Endothelial cell of umbilical vein (primary cell): ENCODE measurements at regions of chr1 and their contacts with region 1.

Region 1: DNA sequence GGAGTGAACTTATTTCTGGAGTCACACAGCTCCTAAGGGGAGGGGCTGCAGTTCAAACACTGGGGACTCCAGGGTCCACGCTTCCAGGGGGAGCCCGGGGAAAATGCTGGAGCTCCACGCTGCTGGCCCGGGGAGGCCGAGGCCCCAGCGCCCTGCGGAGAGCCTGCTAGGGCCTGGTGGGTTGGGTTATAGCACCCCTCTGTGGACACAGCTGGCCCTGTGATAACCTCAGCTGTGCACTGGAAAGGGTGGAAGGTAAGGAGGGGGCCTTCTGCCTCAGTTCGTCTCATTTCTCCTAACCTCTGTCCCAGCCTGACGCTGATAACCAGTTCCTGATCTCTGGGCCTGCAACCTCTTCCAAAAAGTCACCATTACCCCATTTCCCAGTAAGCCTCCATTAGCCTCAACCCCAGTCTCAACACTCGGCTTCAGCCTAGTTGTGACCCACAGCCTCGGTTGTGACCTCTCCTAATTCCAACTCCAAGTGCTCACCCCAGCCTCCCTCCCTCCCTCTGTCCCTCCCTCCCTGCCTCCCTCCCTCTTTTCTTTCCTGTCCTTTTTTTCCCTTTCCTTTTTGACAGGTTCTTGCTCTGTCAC is 7.1 kb downstream of the NBL1 start:
- DNase-seq: peak; percentile 49
- H3K4me3 ChIP-seq: no peak overlapping the region
- H3K27ac ChIP-seq: peak overlapping the region; percentile 65
- H3K4me1 ChIP-seq: peaks cover 14% of the 10 kb centered on the region
- H3K27me3 ChIP-seq: no peaks in the 10 kb centered on the region
- CTCF ChIP-seq: peak; percentile 78 to 85
- POLR2A ChIP-seq: no peak

Region 2: GRCh38 chr1:19251305-19252196 is 399.7 kb before region 1 on chr1 and contains the starts of genes EMC1 and MRTO4:
- CTCF ChIA-PET with region 1: interaction called, 8 read pairs
- POLR2A ChIA-PET with region 1: no interaction called
- dilution Hi-C with region 1: no loop called
- intact Hi-C with region 1: loop called (anchors 1 kb)
- DNase-seq: peak; percentile 89
- H3K4me3 ChIP-seq: peak within 1 kb of the TSS; percentile 59 to 81 (median 78)
- H3K27ac ChIP-seq: peak within 1 kb of the TSS; percentile 54
- H3K4me1 ChIP-seq: peaks cover 18% of the 10 kb centered on the region
- H3K27me3 ChIP-seq: no peaks in the 10 kb centered on the region
- CTCF ChIP-seq: no peak
- POLR2A ChIP-seq: peak; percentile 91
- total RNA-seq, gene EMC1: 77.5 and 84.8 TPM in 2 replicates
- total RNA-seq, gene MRTO4: 47.7 and 49.4 TPM in 2 replicates

Region 3: DNA sequence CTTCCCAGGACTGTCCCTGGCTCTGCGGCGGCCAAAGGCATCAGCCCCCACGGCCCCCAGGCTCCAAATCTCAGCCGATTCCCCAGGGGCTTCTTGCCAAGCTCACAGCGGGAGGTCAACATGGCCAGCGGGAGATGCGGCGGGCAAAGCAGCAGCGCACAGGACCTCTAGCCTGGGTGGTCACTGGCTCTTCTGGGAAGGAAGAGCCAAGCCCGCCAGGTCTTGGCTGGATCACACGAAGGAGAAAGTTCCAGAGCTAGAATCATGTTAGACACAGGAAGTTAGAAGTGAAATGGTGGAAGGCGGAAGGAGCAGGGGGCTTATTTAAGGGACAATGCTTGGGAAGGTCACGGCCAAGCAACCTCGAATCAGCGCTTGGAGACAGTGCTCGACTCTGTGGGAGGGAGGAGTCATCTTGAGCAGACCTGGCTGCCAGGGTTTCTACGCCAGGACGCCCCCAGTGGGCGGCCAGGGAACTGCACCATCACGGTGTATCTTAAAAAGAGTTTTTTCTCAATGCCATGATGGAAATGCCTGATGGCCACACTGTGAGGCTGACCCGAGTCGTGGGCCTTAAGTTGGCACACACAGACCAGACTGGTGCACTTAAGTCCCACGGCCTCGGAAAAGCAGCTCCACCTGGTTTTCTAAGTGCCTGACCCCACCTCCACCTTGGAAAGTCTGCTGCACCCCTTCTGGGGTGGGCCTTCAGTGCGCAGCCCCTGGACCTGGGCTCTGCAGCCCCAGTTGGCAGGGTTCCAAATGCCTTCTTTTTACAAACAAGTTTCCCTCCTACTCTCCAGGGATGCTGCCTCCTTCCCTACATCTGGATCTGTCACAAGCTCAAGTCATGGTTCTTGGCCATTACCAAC is 309.8 kb before region 1 on chr1:
- CTCF ChIA-PET with region 1: interaction called, 99 read pairs
- POLR2A ChIA-PET with region 1: no interaction called
- dilution Hi-C with region 1: no loop called
- intact Hi-C with region 1: loop called (anchors 1 kb)
- DNase-seq: peak; percentile 72
- H3K4me3 ChIP-seq: no peak overlapping the region
- H3K27ac ChIP-seq: no peak overlapping the region
- H3K4me1 ChIP-seq: peaks cover 4% of the 10 kb centered on the region
- H3K27me3 ChIP-seq: no peaks in the 10 kb centered on the region
- CTCF ChIP-seq: peak; percentile 91 to 92
- POLR2A ChIP-seq: no peak

Region 4: GRCh38 chr1:19390901-19391595 is 260.2 kb before region 1 on chr1:
- CTCF ChIA-PET with region 1: interaction called, 75 read pairs
- POLR2A ChIA-PET with region 1: interaction called, 3 read pairs
- dilution Hi-C with region 1: no loop called
- intact Hi-C with region 1: loop called (anchors 1 kb)
- DNase-seq: peak; percentile 82
- H3K4me3 ChIP-seq: no peak overlapping the region
- H3K27ac ChIP-seq: peak overlapping the region; percentile 52
- H3K4me1 ChIP-seq: peaks cover 21% of the 10 kb centered on the region
- H3K27me3 ChIP-seq: no peaks in the 10 kb centered on the region
- CTCF ChIP-seq: peak; percentile 84 to 86
- POLR2A ChIP-seq: no peak

Region 5: GRCh38 chr1:19504796-19505692 is 146.2 kb before region 1 on chr1:
- CTCF ChIA-PET with region 1: interaction called, 3 read pairs
- POLR2A ChIA-PET with region 1: no interaction called
- dilution Hi-C with region 1: no loop called
- intact Hi-C with region 1: loop called (anchors 5 kb)
- DNase-seq: peak; percentile 86
- H3K4me3 ChIP-seq: no peak overlapping the region
- H3K27ac ChIP-seq: peak overlapping the region; percentile 61
- H3K4me1 ChIP-seq: peaks cover 26% of the 10 kb centered on the region
- H3K27me3 ChIP-seq: no peaks in the 10 kb centered on the region
- CTCF ChIP-seq: no peak
- POLR2A ChIP-seq: peak; percentile 33

Region 6: DNA sequence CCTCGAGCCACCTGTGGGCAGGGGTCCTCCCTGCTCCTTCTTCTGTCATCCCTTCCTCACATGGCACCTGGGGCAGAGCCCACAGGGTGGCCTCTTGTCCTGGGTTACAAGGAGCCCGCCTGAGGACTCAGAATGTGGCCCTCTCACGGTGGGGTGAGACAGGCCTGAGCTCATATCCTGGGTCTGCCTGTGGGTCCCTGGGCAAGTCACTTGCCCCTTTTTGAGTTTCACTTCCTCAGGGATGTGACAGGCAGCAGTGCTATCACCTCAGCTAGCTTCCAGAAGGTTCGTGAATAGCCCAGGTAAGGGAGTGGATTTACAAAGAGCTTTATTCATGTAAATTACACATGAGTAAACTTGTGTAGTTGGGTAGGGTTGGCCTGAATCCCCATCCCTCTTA is 46.9 kb after region 1 on chr1:
- CTCF ChIA-PET with region 1: no interaction called
- POLR2A ChIA-PET with region 1: no interaction called
- dilution Hi-C with region 1: no loop called
- intact Hi-C with region 1: no loop called
- DNase-seq: no peak
- H3K4me3 ChIP-seq: no peak overlapping the region
- H3K27ac ChIP-seq: no peak overlapping the region
- H3K4me1 ChIP-seq: no peaks in the 10 kb centered on the region
- H3K27me3 ChIP-seq: no peaks in the 10 kb centered on the region
- CTCF ChIP-seq: no peak
- POLR2A ChIP-seq: no peak

Region 7: GRCh38 chr1:20110679-20111078 is 459.4 kb after region 1 on chr1:
- CTCF ChIA-PET with region 1: no interaction called
- POLR2A ChIA-PET with region 1: no interaction called
- dilution Hi-C with region 1: no loop called
- intact Hi-C with region 1: no loop called
- DNase-seq: peak; percentile 71
- H3K4me3 ChIP-seq: no peak overlapping the region
- H3K27ac ChIP-seq: peak overlapping the region; percentile 65
- H3K4me1 ChIP-seq: peaks cover 14% of the 10 kb centered on the region
- H3K27me3 ChIP-seq: no peaks in the 10 kb centered on the region
- CTCF ChIP-seq: no peak
- POLR2A ChIP-seq: no peak